ENCODE measurements at regions of chr6 and their contacts with region 1.

Region 1: DNA sequence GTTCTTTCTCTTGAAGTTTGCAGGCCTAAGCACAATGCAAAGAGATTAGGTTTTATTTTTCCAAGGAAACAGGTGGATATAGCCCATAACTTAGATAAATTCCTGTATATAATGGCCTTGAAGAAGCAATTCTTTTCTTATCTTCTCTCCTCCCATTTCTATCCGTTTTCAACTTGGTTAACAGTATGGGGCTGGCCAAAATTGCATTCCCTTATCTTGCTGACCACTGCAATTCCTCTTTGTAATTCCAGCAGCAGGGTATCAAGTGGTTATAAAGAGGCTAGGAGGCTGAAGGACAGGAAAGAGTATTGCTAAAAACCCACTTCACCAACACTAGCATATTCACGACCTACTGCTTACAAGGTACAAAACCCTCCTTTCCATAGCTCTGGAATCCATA is 643.5 kb upstream of the ID4 start:
- DNase-seq: no peak
- H3K4me3 ChIP-seq: no peak overlapping the region
- H3K27ac ChIP-seq: no peak overlapping the region
- H3K4me1 ChIP-seq: 0 out of 7 replicates have a peak, but pooled peaks cover 0 to 3% (median 0%) of the 10 kb centered on the region in 4 experiments
- H3K27me3 ChIP-seq: no peaks in the 10 kb centered on the region
- CTCF ChIP-seq: no peak
- EP300 ChIP-seq: no peak
- POLR2A ChIP-seq: no peak
- RAD21 ChIP-seq: no peak

Region 2: DNA sequence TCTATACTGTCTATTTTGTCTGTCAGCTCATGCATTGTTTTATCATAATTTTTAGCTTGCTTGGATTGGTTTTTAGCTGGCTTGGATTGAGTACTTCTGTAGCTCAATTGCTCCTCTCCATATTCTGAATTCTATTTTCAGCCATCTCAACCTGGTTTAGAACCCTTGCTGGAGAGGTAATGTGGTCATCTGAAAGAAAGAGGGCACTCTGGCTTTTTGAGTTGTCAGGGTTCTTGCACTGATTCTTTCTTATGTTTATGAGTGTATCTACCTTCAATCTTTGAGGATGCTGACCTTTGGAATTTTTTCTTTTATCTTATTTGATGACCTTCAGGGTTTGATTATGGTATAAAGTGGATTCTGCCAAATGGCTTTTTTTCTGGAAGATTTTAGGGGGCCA is 10.8 kb after region 1 on chr6:
- CTCF ChIA-PET with region 1: interaction called, 16 read pairs
- POLR2A ChIA-PET with region 1: no interaction called
- DNase-seq: no peak
- H3K4me3 ChIP-seq: no peak overlapping the region
- H3K27ac ChIP-seq: no peak overlapping the region
- H3K4me1 ChIP-seq: no peaks in the 10 kb centered on the region
- H3K27me3 ChIP-seq: no peaks in the 10 kb centered on the region
- CTCF ChIP-seq: peak in 2 of 3 experiments; percentile 21 to 43; a peak in 2 of 4 replicates
- EP300 ChIP-seq: no peak
- POLR2A ChIP-seq: no peak
- RAD21 ChIP-seq: peak; percentile 54 to 63

Region 3: DNA sequence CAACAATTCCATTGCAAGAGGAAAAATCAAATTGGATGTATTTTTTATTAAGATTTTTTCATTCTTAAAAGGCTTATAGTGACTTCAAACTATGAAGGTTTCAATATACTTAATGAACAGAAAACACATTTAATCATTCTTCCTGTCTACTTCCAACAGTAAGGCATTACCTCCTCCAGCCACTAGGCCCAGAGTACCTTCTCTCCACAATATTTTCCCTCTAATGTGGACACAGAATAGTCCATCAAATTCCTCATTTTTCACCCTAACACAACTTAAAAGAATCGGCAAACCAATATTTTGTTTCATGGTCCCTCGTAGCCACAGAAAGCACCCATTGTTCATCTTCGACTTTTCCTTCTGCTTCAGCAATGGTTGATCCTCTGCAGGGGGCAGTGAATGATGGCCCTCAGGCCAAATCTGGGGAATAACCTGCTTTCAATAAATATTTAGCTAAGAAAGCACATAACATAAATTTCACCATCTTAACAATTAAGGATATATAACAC is 308.2 kb after region 1 on chr6:
- CTCF ChIA-PET with region 1: no interaction called
- POLR2A ChIA-PET with region 1: no interaction called
- DNase-seq: no peak
- H3K4me3 ChIP-seq: no peak overlapping the region
- H3K27ac ChIP-seq: no peak overlapping the region
- H3K4me1 ChIP-seq: no peaks in the 10 kb centered on the region
- H3K27me3 ChIP-seq: no peaks in the 10 kb centered on the region
- CTCF ChIP-seq: peak in 1 of 3 experiments; percentile 13; a peak in 1 of 4 replicates
- EP300 ChIP-seq: no peak
- POLR2A ChIP-seq: no peak
- RAD21 ChIP-seq: no peak; a peak in 1 of 4 replicates

Measured in H1 (cell line).